Prostate gland (tissue), 2 donors: ENCODE measurements at regions of chr1 and their contacts with region 1.

Region 1: GRCh38 chr1:46179138-46180081 is 3.1 kb upstream of the P3R3URF start:
- DNase-seq: peak; percentile 92
- H3K4me3 ChIP-seq: no peak overlapping the region
- H3K27ac ChIP-seq: peak overlapping the region; percentile 93 to 94
- H3K4me1 ChIP-seq: peaks cover 35% of the 10 kb centered on the region
- H3K27me3 ChIP-seq: no peaks in the 10 kb centered on the region
- CTCF ChIP-seq: peak; percentile 80 to 97 (median 88)
- POLR2A ChIP-seq: no peak

Region 2: DNA sequence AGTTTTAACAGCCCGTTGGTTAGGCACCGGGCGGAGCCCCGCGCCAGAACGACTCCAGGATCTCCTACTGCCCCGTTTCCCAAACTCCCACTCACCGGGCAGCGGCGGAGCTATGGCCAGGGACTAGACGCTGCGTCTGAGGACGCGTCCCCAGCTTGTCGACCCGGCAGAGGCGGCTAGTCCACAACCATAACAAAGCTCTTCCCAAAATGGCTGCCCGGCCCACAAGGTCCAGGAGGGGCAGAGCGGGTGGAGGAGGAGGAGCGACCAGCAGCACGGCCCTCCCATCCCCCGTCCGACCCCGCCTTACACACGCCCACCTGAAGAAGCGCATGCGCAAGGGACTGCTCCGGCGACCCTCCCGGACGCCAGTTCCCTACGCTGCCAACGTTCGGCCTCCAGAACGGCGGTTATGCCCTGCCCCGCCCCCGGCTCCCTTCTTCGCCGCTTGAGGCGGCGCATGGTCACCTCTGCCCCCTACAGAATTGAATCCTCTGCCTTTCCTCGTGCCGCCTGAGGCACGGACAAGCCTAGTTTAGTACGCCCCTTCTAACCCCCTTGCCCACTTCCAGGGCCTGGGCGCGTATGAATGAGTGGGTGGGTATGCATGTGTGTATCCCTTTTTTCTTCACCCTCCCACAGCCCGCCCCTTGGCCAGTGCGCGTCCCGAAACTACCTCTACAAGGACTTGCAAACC is 492.9 kb before region 1 on chr1 and contains the start of gene GPBP1L1:
- intact Hi-C with region 1: loop called (anchors 5 kb)
- DNase-seq: peak; percentile 98
- H3K4me3 ChIP-seq: peak within 1 kb of the TSS; percentile 60 to 87
- H3K27ac ChIP-seq: peak within 1 kb of the TSS; percentile 94 to 98
- H3K4me1 ChIP-seq: peaks cover 5% of the 10 kb centered on the region
- H3K27me3 ChIP-seq: no peaks in the 10 kb centered on the region
- CTCF ChIP-seq: peak in 1 of 4 experiments; percentile 29
- POLR2A ChIP-seq: peak; percentile 86
- total RNA-seq, gene GPBP1L1: 120 to 153 TPM

Region 3: GRCh38 chr1:45803301-45803780 is 376.1 kb before region 1 on chr1 and contains the start of gene MAST2:
- intact Hi-C with region 1: loop called (anchors 10 kb)
- DNase-seq: peak; percentile 84
- H3K4me3 ChIP-seq: peak within 1 kb of the TSS; percentile 46 to 48
- H3K27ac ChIP-seq: peak within 1 kb of the TSS; percentile 42 to 50
- H3K4me1 ChIP-seq: peaks cover 5% of the 10 kb centered on the region
- H3K27me3 ChIP-seq: no peaks in the 10 kb centered on the region
- CTCF ChIP-seq: peak in 1 of 4 experiments; percentile 20
- POLR2A ChIP-seq: peak; percentile 66
- total RNA-seq, gene MAST2: 25.2 to 81.3 TPM

Region 4: DNA sequence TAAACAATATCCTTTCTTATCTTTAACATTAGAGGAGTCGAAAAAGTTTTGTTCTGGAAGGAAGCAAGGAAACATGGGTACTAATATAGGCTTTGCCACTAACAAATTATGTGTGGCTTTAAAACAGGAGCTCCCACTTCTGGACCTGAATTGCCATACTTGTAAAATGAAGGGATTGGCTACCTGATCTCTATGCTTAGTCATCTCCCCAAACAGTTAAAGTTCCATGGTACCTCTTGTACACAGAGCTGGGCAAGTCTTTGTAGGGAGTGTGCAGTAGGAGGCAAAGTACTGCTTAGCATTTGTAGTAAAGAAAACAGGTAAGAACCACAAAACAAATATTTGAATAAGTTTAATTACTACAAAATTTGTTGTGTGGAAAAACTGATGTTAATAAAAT is 294.7 kb before region 1 on chr1:
- intact Hi-C with region 1: loop called (anchors 10 kb)
- DNase-seq: peak; percentile 9
- H3K4me3 ChIP-seq: no peak overlapping the region
- H3K27ac ChIP-seq: no peak overlapping the region
- H3K4me1 ChIP-seq: no peaks in the 10 kb centered on the region
- H3K27me3 ChIP-seq: no peaks in the 10 kb centered on the region
- CTCF ChIP-seq: no peak
- POLR2A ChIP-seq: no peak

Region 5: GRCh38 chr1:46036894-46037839 is 142.2 kb before region 1 on chr1:
- intact Hi-C with region 1: loop called (anchors 2 kb)
- DNase-seq: peak; percentile 86
- H3K4me3 ChIP-seq: no peak overlapping the region
- H3K27ac ChIP-seq: no peak overlapping the region
- H3K4me1 ChIP-seq: no peaks in the 10 kb centered on the region
- H3K27me3 ChIP-seq: no peaks in the 10 kb centered on the region
- CTCF ChIP-seq: peak; percentile 94 to 99 (median 98)
- POLR2A ChIP-seq: no peak

Region 6: DNA sequence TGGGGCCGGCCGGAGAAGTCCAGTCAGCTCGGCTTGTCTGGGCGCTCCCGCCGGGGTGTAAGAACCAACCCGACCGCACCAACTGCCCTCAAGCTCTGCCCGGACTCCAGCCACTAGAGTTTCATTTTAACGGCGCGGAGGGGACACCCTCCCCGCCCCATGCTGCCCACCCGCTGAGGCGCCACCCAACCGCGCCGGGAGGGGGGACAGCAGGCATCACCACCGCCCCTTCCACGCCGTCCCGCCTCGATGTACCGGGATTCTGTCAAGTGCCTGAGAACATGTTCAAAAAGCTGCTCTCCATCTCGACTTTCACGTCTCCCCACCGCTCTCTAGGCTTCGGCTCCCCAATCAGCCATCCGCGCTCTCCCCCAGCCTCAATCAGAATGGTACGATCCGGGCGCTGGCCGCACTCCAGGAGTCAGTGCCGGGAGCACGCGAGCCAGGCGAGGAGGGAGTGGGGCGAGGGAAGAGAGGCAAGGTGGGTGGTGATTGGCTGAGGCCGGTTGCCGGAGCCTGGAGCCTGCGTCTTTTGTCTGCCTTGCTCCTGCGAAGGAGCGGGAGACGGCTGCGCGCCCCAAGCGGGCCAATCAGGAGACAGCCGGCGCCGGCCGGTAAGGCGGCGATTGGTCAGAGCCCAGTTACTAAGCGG is 46.8 kb before region 1 on chr1 and contains the start of gene PIK3R3:
- intact Hi-C with region 1: loop called (anchors 5 kb)
- DNase-seq: peak; percentile 98
- H3K4me3 ChIP-seq: peak within 1 kb of the TSS; percentile 49 to 63
- H3K27ac ChIP-seq: peak within 1 kb of the TSS; percentile 87
- H3K4me1 ChIP-seq: no peaks in the 10 kb centered on the region
- H3K27me3 ChIP-seq: no peaks in the 10 kb centered on the region
- CTCF ChIP-seq: peak in 2 of 4 experiments; percentile 26 to 50
- POLR2A ChIP-seq: peak; percentile 94
- total RNA-seq, gene PIK3R3: 9.1 to 26.5 TPM